Psoas muscle (tissue), 8 donors: ENCODE measurements at regions of chr4 and their contacts with region 1.

Region 1: GRCh38 chr4:127965062-127965802 is at the starts of genes ABHD18 and MFSD8:
- DNase-seq: peak; percentile 99 to 100
- ATAC-seq: peak; percentile 96 to 97 (median 96)
- H3K4me3 ChIP-seq: peak within 1 kb of the TSS; percentile 100
- H3K27ac ChIP-seq: peak within 1 kb of the TSS; percentile 90
- H3K4me1 ChIP-seq: peaks cover 35% of the 10 kb centered on the region
- H3K27me3 ChIP-seq: no peaks in the 10 kb centered on the region
- CTCF ChIP-seq: peak; percentile 48
- total RNA-seq, gene ABHD18: 7.4 to 21.4 (median 15.0) TPM
- total RNA-seq, gene MFSD8: 6.0 to 10.9 (median 7.4) TPM

Region 2: GRCh38 chr4:127293496-127293895 is 671.7 kb before region 1 on chr4:
- intact Hi-C with region 1: no loop called
- DNase-seq: no peak
- ATAC-seq: no peak
- H3K4me3 ChIP-seq: no peak overlapping the region
- H3K27ac ChIP-seq: no peak overlapping the region
- H3K4me1 ChIP-seq: no peaks in the 10 kb centered on the region
- H3K27me3 ChIP-seq: no peaks in the 10 kb centered on the region
- CTCF ChIP-seq: no peak

Region 3: GRCh38 chr4:127479031-127479622 is 486.1 kb before region 1 on chr4:
- intact Hi-C with region 1: no loop called
- DNase-seq: no peak
- ATAC-seq: no peak
- H3K4me3 ChIP-seq: no peak overlapping the region
- H3K27ac ChIP-seq: no peak overlapping the region
- H3K4me1 ChIP-seq: no peaks in the 10 kb centered on the region
- H3K27me3 ChIP-seq: no peaks in the 10 kb centered on the region
- CTCF ChIP-seq: peak; percentile 37

Region 4: GRCh38 chr4:127782274-127783025 is 182.8 kb before region 1 on chr4 and contains the start of gene HSPA4L:
- intact Hi-C with region 1: loop called (anchors 10 kb)
- DNase-seq: peak; percentile 67 to 91
- ATAC-seq: peak; percentile 64 to 98 (median 85)
- H3K4me3 ChIP-seq: peak within 1 kb of the TSS; percentile 85
- H3K27ac ChIP-seq: peak within 1 kb of the TSS; percentile 72
- H3K4me1 ChIP-seq: no peaks in the 10 kb centered on the region
- H3K27me3 ChIP-seq: no peaks in the 10 kb centered on the region
- CTCF ChIP-seq: peak; percentile 21
- total RNA-seq, gene HSPA4L: 1.6 to 8.2 (median 5.0) TPM

Region 5: GRCh38 chr4:127880764-127881562 is 84.3 kb before region 1 on chr4 and contains the start of gene PLK4:
- intact Hi-C with region 1: loop called in 1 of 2 experiments (anchors 10 kb)
- DNase-seq: peak; percentile 92 to 95
- ATAC-seq: peak; percentile 94 to 100 (median 99)
- H3K4me3 ChIP-seq: peak within 1 kb of the TSS; percentile 80
- H3K27ac ChIP-seq: peak within 1 kb of the TSS; percentile 37
- H3K4me1 ChIP-seq: peaks cover 5% of the 10 kb centered on the region
- H3K27me3 ChIP-seq: no peaks in the 10 kb centered on the region
- CTCF ChIP-seq: no peak
- total RNA-seq, gene PLK4: 0.36 to 0.67 (median 0.42) TPM in 3 of 4 donors, not detected in the other

Region 6: DNA sequence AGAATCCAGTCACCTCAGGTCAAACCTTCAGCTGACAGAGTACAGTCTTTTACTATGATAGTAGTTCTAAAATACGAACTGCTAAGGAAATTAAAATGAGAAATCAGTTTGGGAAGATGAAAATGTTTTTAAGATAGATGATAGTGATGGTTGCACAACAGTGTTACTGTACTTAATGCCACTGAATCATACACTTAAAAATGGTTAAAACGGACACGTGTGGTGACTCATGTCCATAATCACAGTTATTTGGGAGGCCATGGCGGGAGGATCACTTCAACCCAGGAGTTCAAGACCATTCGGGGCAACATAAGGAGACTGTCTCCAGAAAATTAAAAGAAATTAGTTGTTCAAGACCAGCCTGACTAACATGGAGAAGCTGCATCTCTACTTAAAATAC is 41.4 kb after region 1 on chr4:
- intact Hi-C with region 1: no loop called
- DNase-seq: no peak
- ATAC-seq: no peak
- H3K4me3 ChIP-seq: no peak overlapping the region
- H3K27ac ChIP-seq: no peak overlapping the region
- H3K4me1 ChIP-seq: no peaks in the 10 kb centered on the region
- H3K27me3 ChIP-seq: no peaks in the 10 kb centered on the region
- CTCF ChIP-seq: no peak

Region 7: GRCh38 chr4:128060699-128061565 is 95.7 kb after region 1 on chr4 and contains the start of gene LARP1B:
- intact Hi-C with region 1: loop called in 1 of 2 experiments (anchors 2 kb)
- DNase-seq: peak; percentile 96 to 98
- ATAC-seq: peak; percentile 95 to 97 (median 96)
- H3K4me3 ChIP-seq: peak within 1 kb of the TSS; percentile 84
- H3K27ac ChIP-seq: peak within 1 kb of the TSS; percentile 97
- H3K4me1 ChIP-seq: peaks cover 21% of the 10 kb centered on the region
- H3K27me3 ChIP-seq: no peaks in the 10 kb centered on the region
- CTCF ChIP-seq: no peak
- total RNA-seq, gene LARP1B: 13.3 to 23.6 (median 20.1) TPM

Region 8: DNA sequence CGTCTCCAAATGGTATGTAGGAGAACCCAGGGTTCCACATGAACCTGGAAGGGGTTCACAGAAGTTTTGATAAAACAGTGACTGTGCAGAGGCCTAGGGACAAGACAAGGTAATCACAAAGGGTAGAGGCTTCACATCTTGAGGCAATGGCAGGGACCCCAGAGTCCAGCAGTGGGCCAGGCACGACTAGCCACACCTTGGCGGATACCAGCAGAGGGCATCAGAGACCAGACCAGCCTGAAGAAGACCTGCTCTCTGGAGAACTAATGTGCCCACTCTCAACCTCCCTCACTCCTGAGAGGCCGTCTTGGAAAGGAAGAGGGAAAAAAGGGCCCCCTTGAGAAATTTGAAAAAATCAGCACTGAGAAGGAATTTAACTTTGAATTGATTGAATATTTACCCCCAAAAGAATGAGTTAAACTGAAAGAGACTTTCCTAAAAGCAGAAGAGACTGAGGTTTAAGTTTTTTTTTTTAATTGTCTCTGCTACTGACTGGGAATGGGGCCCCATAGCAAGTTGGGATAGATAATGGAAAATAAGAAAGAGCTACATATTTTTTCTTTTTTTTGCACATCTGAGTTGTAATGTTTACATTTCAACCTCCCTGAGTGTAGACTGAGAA is 600.4 kb after region 1 on chr4:
- intact Hi-C with region 1: loop called in 1 of 2 experiments (anchors 10 kb)
- DNase-seq: peak; percentile 30 to 56
- ATAC-seq: peak; percentile 58 to 80 (median 71)
- H3K4me3 ChIP-seq: no peak overlapping the region
- H3K27ac ChIP-seq: no peak overlapping the region
- H3K4me1 ChIP-seq: peaks cover 4% of the 10 kb centered on the region
- H3K27me3 ChIP-seq: no peaks in the 10 kb centered on the region
- CTCF ChIP-seq: peak; percentile 42